Activated T-helper 1 cell treated with anti-CD3 and anti-CD28 coated beads, Interleukin-12 subunit alpha, Interleukin-12 subunit beta, Interleukin-2, Interleukin-4 antibody, amounts not matched to agents 30 ng/mL and 10 ng/mL and 1 ng/mL, durations not matched to agents 14 hours and 24 hours and 36 hours (primary cell): ENCODE measurements at regions of chr5 and their contacts with region 1.

Region 1: DNA sequence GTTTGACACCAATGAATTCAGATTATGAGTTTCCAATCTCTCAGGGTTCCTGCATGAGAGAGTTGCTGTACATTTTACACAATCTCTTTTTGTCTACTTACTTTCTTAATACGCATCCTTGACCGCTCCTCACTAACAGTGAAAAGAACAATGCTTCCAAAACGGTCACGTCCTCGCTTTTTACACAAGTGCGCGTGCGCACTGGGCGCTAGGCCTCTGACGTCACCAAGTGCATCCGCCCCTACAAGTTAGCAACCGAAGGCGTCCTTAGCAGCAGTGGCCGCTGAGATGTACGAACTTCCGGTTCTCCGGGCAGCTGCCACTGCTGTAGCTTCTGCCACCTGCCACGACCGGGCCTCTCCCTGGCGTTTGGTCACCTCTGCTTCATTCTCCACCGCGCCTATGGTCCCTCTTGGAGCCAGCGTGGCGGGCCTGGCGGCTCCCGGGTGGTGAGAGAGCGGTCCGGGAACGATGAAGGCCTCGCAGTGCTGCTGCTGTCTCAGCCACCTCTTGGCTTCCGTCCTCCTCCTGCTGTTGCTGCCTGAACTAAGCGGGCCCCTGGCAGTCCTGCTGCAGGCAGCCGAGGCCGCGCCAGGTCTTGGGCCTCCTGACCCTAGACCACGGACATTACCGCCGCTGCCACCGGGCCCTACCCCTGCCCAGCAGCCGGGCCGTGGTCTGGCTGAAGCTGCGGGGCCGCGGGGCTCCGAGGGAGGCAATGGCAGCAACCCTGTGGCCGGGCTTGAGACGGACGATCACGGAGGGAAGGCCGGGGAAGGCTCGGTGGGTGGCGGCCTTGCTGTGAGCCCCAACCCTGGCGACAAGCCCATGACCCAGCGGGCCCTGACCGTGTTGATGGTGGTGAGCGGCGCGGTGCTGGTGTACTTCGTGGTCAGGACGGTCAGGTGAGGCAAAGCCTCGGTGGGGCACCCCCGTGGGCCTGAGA is at the start of gene FAM174A:
- DNase-seq: peak; percentile 92
- H3K4me3 Mint-ChIP-seq: peak within 1 kb of the TSS; percentile 92
- H3K27ac Mint-ChIP-seq: peak within 1 kb of the TSS; percentile 99
- H3K4me1 Mint-ChIP-seq: peaks cover 25% of the 10 kb centered on the region
- H3K27me3 Mint-ChIP-seq: peaks cover 6% of the 10 kb centered on the region
- total RNA-seq, gene FAM174A: 8.2 and 9.7 TPM in 2 replicates

Region 2: DNA sequence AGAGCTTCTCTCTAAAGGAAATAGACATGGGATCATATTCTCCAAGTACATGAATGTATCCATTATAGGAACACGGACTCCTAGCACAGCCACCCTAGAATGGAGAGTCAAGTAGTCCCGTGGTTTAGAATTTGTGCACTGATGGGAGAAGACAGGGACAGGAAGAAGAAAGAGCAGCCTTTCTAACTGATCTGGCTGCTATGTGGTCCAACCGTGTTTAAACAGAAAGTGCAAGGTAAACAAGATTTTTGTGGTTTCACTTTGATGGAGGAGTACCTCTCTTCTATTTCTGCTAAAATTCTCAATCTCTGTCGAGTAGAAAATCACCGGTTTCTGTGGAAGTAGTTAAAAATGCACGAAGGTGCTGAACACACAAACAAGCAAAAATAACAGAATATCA is 196.4 kb after region 1 on chr5:
- intact Hi-C with region 1: loop called (anchors 2 kb)
- DNase-seq: peak; percentile 20
- H3K4me3 Mint-ChIP-seq: peak overlapping the region; percentile 71
- H3K27ac Mint-ChIP-seq: peak overlapping the region; percentile 81
- H3K4me1 Mint-ChIP-seq: peaks cover 14% of the 10 kb centered on the region
- H3K27me3 Mint-ChIP-seq: no peaks in the 10 kb centered on the region